AG04449 (cell line): ENCODE measurements at regions of chr17 and their contacts with region 1.

Region 1: DNA sequence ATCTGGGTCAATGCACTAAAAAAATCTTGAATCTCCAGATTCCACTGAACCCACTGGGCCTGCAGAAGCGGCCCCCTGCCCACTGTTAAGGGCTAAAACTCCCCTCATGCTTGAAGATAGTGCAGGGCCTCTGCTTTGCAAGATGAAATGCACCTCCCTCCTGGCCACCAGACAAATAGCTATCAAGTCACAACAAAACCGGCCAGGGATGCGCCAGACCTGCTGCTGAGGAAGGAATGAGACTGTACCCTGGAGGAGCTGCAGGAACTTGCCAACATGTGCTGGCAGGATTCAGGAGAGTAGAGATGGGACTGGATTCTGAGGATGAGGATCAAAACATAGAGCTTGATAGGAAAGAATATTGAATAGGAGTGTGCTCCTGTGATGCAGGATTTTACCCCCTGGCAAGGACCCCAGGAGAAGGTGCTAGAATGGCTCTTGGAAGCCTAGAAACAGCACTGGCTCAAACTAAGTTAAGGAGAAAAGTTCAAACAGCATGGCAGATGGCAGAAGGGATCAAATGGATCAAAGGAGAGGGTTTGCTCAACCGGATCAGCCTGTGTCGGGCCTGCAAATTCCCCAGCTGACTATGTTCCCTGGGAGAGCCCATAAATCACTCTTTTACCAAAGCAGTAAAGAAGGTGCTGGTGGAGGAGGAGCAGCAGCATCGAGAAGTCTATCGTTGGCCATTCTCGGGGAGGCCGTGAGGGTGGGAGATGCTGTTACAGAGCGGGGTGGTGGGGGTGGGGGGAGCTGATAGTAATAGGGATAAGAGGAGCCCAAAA is 27.2 kb upstream of the XYLT2 start:
- DNase-seq: no peak
- H3K4me3 ChIP-seq: no peak overlapping the region
- CTCF ChIP-seq: no peak

Region 2: DNA sequence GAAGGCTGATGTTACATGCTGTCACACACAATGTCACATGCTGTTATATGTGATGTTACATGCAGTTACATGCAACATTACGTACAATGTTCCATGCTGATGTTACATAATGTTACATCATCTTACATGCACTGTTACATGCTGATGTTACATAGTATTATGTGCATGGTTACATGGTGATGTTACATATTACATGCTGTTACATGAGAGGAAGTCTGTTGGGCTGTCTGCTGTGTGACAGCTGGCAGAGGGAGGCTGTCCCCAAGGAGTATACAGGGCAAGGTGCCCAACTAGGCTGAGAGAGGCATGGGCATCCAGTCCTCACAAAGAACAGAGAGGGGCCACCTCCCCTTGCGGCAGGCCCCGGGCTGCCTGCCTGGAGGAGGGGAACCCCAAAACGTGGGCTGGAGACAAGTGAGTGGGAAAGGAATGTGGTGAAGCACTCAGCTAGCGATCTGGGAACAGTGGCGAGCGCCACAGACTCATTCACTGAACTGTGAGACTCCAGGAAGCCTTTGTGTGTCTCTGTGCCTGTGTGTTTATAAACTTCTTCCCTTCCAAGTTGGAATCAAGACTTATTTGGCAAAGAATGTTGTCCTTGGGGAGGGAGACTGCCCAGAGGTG is 13.8 kb before region 1 on chr17:
- CTCF ChIA-PET with region 1: interaction called, 12 read pairs
- POLR2A ChIA-PET with region 1: no interaction called
- DNase-seq: no peak
- H3K4me3 ChIP-seq: no peak overlapping the region
- CTCF ChIP-seq: no peak